Right cardiac atrium (tissue), 5 donors: ENCODE measurements at regions of chr1 and their contacts with region 1.

Region 1: DNA sequence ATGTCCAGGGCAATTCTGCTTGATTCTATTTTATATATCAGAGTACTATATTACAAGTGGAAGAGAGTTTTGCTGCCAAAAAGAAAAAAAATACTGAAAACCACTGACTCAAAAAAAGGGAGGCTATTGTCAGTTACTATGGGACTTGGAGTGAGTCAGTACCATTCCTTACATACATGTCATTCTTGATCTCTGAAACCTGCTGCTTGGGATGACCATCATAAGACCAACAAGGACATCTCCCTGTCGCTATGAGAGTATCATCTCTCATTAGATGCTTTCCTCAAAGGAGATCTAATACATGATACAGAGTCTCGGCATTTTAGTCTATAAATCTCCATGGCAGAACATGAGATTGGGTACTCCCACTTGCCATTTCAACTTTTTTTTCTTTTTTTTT is 11.8 kb upstream of the INPP5B start:
- DNase-seq: no peak
- ATAC-seq: no peak
- H3K4me3 ChIP-seq: no peak overlapping the region
- H3K27ac ChIP-seq: no peak overlapping the region
- H3K4me1 ChIP-seq: no peaks in the 10 kb centered on the region
- H3K27me3 ChIP-seq: no peaks in the 10 kb centered on the region

Region 2: DNA sequence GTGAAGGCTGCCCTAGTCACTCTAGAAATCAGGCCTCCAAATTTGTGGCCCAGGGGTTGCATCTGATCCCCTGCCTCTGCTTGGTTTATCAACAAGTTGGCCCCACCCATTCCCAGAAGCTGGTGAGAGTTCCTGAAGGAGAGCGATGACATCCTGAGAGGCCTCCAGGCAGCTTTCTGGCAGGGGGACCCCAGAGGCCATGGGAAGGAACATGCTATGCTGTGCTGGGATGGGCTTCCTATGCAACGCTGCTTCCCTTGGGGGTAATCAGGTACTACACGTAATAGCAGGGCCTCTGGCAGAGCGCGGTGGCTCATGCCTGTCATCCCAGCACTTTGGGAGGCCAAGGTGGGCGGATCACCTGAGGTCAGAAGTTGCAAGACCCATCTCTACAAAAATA is 90.9 kb before region 1 on chr1:
- intact Hi-C with region 1: no loop called
- DNase-seq: no peak
- ATAC-seq: no peak
- H3K4me3 ChIP-seq: no peak overlapping the region
- H3K27ac ChIP-seq: no peak overlapping the region
- H3K4me1 ChIP-seq: no peaks in the 10 kb centered on the region
- H3K27me3 ChIP-seq: no peaks in the 10 kb centered on the region

Region 3: DNA sequence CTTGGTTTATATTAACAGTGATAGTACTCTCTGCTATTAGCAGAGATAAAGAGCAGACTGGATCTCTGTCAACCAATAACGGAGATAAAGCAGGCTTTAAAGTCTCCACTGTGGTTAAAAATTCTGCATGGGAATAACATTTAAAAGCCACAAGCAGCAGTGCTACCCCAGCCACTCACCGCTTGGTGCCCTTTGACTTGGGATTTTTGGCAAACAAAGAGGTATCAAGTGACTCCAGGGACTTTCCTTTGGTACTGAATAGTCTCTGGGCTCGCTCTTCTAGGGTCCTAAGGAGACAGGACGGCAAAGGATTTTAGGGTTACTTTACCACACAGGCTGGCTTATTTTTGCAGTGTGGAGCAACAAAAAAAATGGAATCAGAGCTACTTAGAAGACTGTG is 19.9 kb after region 1 on chr1:
- intact Hi-C with region 1: loop called in 1 of 4 experiments (anchors 2 kb)
- DNase-seq: no peak
- ATAC-seq: no peak
- H3K4me3 ChIP-seq: no peak overlapping the region
- H3K27ac ChIP-seq: no peak overlapping the region
- H3K4me1 ChIP-seq: no peaks in the 10 kb centered on the region
- H3K27me3 ChIP-seq: no peaks in the 10 kb centered on the region